ENCODE measurements at regions of chr19 and their contacts with region 1.

Region 1: GRCh38 chr19:49746206-49747091 is 16.7 kb downstream of the TSKS start:
- DNase-seq: peak; percentile 79
- H3K4me3 ChIP-seq: no peak overlapping the region
- H3K27ac ChIP-seq: no peak overlapping the region
- H3K4me1 ChIP-seq: no peaks in the 10 kb centered on the region
- H3K27me3 ChIP-seq: no peaks in the 10 kb centered on the region
- CTCF ChIP-seq: no peak

Region 2: DNA sequence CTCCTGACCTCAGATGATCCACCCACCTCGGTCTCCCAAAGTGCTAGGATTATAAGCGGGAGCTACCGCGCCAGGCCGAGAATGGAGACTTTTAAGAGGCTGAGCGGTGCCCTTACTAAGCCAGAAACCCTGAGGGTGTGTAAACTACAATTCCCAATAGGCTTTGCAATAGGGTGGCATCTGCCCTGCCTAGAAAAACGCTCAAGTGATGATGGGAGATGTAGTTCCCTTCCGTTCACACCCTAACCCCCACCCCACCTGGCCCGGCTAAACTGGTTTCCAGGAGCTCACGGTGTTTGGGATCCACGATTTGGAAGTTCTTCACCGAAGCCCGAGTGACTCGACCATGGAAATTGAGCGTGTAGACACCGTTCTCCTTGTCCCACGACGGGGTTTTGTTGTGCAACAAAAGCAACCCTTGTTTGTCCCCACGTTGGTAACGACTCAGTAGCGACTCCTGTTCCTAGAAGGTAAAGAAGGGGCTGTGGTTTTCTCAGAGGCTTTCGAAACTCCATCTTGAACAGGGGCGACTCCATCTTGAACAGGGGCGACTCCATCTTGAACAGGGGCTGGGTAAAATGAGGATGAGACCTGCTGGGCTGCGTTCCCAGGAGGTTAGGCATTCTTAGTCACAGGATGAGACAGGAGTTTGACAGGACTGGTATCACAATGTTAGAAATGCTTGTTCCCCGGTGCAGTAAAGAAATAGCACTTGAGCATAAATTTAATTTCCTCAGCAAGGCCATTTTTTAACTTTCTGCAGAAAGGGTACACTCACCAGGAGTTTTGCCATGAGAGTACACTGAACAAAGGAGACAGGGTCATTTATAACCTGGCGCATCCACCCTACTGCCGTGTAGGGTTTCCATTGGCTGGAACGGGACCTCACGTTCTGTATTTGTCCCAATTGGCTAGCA is 864.5 kb before region 1 on chr19:
- CTCF ChIA-PET with region 1: no interaction called
- POLR2A ChIA-PET with region 1: interaction called, 15 read pairs
- intact Hi-C with region 1: no loop called
- DNase-seq: no peak
- H3K4me3 ChIP-seq: no peak overlapping the region
- H3K27ac ChIP-seq: no peak overlapping the region
- H3K4me1 ChIP-seq: no peaks in the 10 kb centered on the region
- H3K27me3 ChIP-seq: no peaks in the 10 kb centered on the region
- CTCF ChIP-seq: no peak

Region 3: GRCh38 chr19:49249933-49250332 is 496.5 kb before region 1 on chr19:
- CTCF ChIA-PET with region 1: interaction called, 17 read pairs
- POLR2A ChIA-PET with region 1: no interaction called
- intact Hi-C with region 1: no loop called
- DNase-seq: no peak
- H3K4me3 ChIP-seq: no peak overlapping the region
- H3K27ac ChIP-seq: no peak overlapping the region
- H3K4me1 ChIP-seq: no peaks in the 10 kb centered on the region
- H3K27me3 ChIP-seq: no peaks in the 10 kb centered on the region
- CTCF ChIP-seq: no peak

Region 4: GRCh38 chr19:49651029-49651825 is 95.2 kb before region 1 on chr19:
- CTCF ChIA-PET with region 1: no interaction called
- POLR2A ChIA-PET with region 1: no interaction called
- intact Hi-C with region 1: no loop called
- DNase-seq: no peak
- H3K4me3 ChIP-seq: no peak overlapping the region
- H3K27ac ChIP-seq: no peak overlapping the region
- H3K4me1 ChIP-seq: no peaks in the 10 kb centered on the region
- H3K27me3 ChIP-seq: no peaks in the 10 kb centered on the region
- CTCF ChIP-seq: no peak

Region 5: DNA sequence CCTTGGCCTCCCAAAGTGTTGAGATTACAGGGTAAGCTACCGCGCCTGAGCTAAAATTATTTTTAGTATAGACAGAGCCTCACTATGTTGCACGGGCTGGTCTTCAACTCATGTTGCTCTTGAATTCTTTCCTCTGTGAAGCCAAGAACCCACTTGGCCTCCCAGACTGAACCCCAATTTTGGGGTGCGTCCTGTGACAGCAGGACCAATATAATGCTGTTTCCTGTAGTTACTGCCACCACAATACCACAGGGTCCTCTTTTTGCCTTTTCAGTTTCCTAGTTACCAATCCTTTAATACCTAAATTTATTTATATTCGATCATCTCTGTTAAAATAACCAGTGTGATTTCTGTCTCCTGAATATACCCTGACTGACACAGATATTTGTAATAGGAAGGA is 16.3 kb before region 1 on chr19:
- CTCF ChIA-PET with region 1: no interaction called
- POLR2A ChIA-PET with region 1: interaction called, 18 read pairs
- intact Hi-C with region 1: no loop called
- DNase-seq: no peak
- H3K4me3 ChIP-seq: no peak overlapping the region
- H3K27ac ChIP-seq: no peak overlapping the region
- H3K4me1 ChIP-seq: no peaks in the 10 kb centered on the region
- H3K27me3 ChIP-seq: no peaks in the 10 kb centered on the region
- CTCF ChIP-seq: no peak

Region 6: GRCh38 chr19:49766007-49766937 is 19.8 kb after region 1 on chr19:
- CTCF ChIA-PET with region 1: interaction called, 14 read pairs
- POLR2A ChIA-PET with region 1: no interaction called
- intact Hi-C with region 1: no loop called
- DNase-seq: peak; percentile 100
- H3K4me3 ChIP-seq: peak overlapping the region; percentile 99
- H3K27ac ChIP-seq: peak overlapping the region; percentile 95
- H3K4me1 ChIP-seq: peaks cover 15% of the 10 kb centered on the region
- H3K27me3 ChIP-seq: no peaks in the 10 kb centered on the region
- CTCF ChIP-seq: no peak

Region 7: DNA sequence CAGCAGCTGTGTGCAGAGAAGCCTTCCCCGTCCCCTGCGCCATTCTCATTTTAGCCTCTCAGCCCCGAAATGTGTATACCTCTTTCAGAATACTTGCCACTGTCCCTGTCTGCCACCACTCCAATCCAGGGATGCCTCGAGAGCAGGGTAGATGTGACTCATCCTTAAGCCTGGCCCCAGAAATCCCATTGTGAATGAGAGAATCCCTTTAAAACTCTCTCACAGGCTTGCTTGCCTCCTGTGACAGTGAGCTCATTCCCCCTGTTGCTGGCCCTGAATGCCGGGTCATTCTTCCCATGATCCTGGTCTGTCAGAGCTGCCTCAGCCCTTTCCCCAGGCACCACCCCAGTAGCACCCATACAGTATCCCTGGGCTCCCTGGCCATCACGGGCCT is 29.9 kb after region 1 on chr19:
- CTCF ChIA-PET with region 1: no interaction called
- POLR2A ChIA-PET with region 1: no interaction called
- intact Hi-C with region 1: no loop called
- DNase-seq: no peak
- H3K4me3 ChIP-seq: no peak overlapping the region
- H3K27ac ChIP-seq: no peak overlapping the region
- H3K4me1 ChIP-seq: no peaks in the 10 kb centered on the region
- H3K27me3 ChIP-seq: no peaks in the 10 kb centered on the region
- CTCF ChIP-seq: no peak

Measured in A673 (cell line).